Activated T-helper 1 cell treated with anti-CD3 and anti-CD28 coated beads, Interleukin-12 subunit alpha, Interleukin-12 subunit beta, Interleukin-2, Interleukin-4 antibody, amounts not matched to agents 30 ng/mL and 10 ng/mL and 1 ng/mL, durations not matched to agents 14 hours and 24 hours and 36 hours (primary cell): ENCODE measurements at regions of chrX and their contacts with region 1.

Region 1: GRCh38 chrX:95841863-95842262 is 842.8 kb upstream of the DIAPH2 start:
- DNase-seq: no peak
- H3K4me3 Mint-ChIP-seq: no peak overlapping the region
- H3K27ac Mint-ChIP-seq: no peak overlapping the region
- H3K4me1 Mint-ChIP-seq: no peaks in the 10 kb centered on the region
- H3K27me3 Mint-ChIP-seq: no peaks in the 10 kb centered on the region

Region 2: DNA sequence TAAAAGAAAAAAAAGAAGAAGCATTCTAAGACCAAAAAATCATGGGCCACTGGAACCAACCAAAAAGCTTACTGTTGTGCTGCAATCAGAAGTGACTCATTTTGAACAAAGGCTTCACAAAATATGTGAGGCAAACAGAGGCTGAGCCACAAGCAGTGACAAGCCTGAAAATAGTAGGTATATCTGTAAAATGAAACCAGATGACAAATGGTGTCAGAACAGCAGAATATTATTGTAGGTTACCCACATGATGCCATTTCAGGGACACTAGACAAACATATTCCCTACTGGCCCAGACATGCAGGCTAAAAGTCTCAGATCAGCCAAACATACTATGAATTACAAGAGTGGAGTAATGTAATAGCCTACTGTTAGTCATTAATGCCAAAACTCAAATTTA is 459.1 kb before region 1 on chrX:
- intact Hi-C with region 1: loop called (anchors 5 kb)
- DNase-seq: no peak
- H3K4me3 Mint-ChIP-seq: no peak overlapping the region
- H3K27ac Mint-ChIP-seq: no peak overlapping the region
- H3K4me1 Mint-ChIP-seq: no peaks in the 10 kb centered on the region
- H3K27me3 Mint-ChIP-seq: no peaks in the 10 kb centered on the region

Region 3: GRCh38 chrX:95885074-95885473 is 43.2 kb after region 1 on chrX:
- intact Hi-C with region 1: no loop called
- DNase-seq: no peak
- H3K4me3 Mint-ChIP-seq: no peak overlapping the region
- H3K27ac Mint-ChIP-seq: no peak overlapping the region
- H3K4me1 Mint-ChIP-seq: no peaks in the 10 kb centered on the region
- H3K27me3 Mint-ChIP-seq: no peaks in the 10 kb centered on the region